HEK293 (cell line): ENCODE measurements at regions of chrX and their contacts with region 1.

Region 1: GRCh38 chrX:109709129-109709631 is 23.9 kb downstream of the ACSL4 start:
- H3K4me3 ChIP-seq: no peak overlapping the region
- H3K27ac ChIP-seq: no peak overlapping the region
- H3K4me1 ChIP-seq: peaks cover 3% of the 10 kb centered on the region; the same call in 1 of the 2 replicates
- CTCF ChIP-seq: no peak

Region 2: GRCh38 chrX:109600237-109600651 is 108.9 kb before region 1 on chrX:
- CTCF ChIA-PET with region 1: no interaction called
- POLR2A ChIA-PET with region 1: no interaction called
- H3K4me3 ChIP-seq: no peak overlapping the region
- H3K27ac ChIP-seq: no peak overlapping the region
- H3K4me1 ChIP-seq: no peaks in the 10 kb centered on the region
- CTCF ChIP-seq: no peak

Region 3: GRCh38 chrX:109672239-109672638 is 36.9 kb before region 1 on chrX:
- CTCF ChIA-PET with region 1: interaction called, 12 read pairs
- POLR2A ChIA-PET with region 1: no interaction called
- H3K4me3 ChIP-seq: no peak overlapping the region
- H3K27ac ChIP-seq: no peak overlapping the region
- H3K4me1 ChIP-seq: no peaks in the 10 kb centered on the region
- CTCF ChIP-seq: no peak

Region 4: GRCh38 chrX:109697855-109698254 is 11.3 kb before region 1 on chrX:
- CTCF ChIA-PET with region 1: interaction called, 15 read pairs
- POLR2A ChIA-PET with region 1: no interaction called
- H3K4me3 ChIP-seq: no peak overlapping the region
- H3K27ac ChIP-seq: no peak overlapping the region
- H3K4me1 ChIP-seq: peaks cover 13% of the 10 kb centered on the region
- CTCF ChIP-seq: no peak